Activated CD4-positive, alpha-beta memory T cell treated with anti-CD3 and anti-CD28 coated beads for 36 hours (primary cell): ENCODE measurements at regions of chr10 and their contacts with region 1.

Region 1: DNA sequence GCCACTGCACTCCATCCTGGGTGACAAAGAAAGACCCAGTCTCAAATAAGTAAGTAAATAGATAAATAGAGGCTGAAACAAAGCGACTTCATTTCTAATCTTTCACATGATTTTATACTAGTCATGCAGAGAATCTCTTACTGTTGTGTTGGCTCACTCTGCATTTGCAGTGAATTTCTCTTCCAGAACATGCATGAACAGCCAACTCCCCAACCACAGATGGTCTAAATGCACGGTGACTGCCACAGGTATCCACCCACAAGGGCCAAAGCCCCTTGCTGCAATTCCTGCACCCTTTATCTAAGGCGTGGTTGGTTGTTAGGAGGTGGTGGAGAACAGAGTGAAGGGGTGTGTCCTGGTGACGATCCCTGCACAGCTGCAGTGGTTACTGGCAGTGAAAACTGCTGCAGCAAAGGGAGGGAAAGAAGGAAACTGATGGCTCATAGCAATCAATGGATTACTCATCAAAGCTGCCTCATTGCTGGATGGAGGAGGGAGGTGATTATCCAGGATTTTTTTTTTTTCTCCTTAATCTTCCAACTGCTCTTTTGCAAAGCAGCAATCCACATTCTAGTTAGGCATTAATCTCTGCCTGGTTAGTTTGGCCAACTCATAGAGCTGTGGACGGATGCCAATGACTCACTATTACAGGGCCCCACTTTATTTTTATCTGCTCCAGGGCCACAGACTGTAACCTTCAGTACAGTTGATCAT is 50.6 kb downstream of the PRTFDC1 start:
- DNase-seq: peak; percentile 47
- H3K4me3 Mint-ChIP-seq: no peak overlapping the region
- H3K27ac Mint-ChIP-seq: peak overlapping the region; percentile 25
- H3K4me1 Mint-ChIP-seq: peaks cover 47% of the 10 kb centered on the region
- H3K27me3 Mint-ChIP-seq: no peaks in the 10 kb centered on the region

Region 2: DNA sequence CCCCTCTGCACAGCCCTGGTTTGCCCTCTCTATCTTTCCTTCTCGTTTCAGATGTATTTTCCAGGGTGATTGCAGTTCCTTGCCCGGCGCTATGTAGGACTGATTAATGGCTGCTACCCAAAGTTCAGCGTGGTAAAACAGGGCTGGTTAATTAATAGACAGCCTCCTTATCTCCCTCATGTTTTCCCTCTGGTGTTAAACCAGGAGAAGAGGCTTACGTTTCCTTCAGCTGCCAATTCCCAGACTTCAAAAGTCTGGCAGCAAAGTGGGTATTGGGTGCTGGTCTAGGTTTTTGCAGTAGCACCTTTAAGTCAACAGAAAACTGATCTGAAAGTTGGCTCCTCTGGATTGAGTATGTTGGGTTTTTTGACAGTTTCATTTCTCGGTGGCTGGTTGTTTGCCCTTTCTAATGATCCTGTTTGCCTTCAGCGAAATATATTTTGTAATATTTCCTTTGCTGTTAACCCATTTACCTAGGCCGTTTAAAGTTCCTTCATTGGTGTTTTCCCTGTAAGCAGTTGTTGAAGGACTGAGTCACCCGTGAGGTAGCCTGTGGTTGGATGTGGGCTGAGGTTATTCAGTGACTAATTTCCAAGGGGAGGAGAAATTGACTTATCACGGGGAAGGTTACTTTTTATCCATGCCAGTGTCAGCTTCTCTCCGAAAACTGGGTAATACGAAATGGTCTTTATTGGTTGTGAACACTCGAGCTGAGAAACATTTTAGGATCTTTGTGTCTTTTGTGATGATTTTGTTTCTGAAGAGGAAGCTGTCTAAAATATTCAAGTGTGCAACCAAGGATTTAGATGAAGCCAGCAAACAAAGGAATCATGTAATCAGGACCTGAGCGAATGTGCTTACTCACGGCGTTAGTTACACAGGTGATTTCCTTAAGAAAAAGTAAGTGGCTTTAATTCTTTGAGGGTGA is 435.7 kb before region 1 on chr10:
- CTCF ChIA-PET with region 1: no interaction called
- POLR2A ChIA-PET with region 1: no interaction called
- intact Hi-C with region 1: loop called (anchors 2 kb)
- DNase-seq: peak; percentile 84
- H3K4me3 Mint-ChIP-seq: peak overlapping the region; percentile 44
- H3K27ac Mint-ChIP-seq: peak overlapping the region; percentile 53
- H3K4me1 Mint-ChIP-seq: peaks cover 42% of the 10 kb centered on the region
- H3K27me3 Mint-ChIP-seq: peaks cover 21% of the 10 kb centered on the region

Region 3: GRCh38 chr10:24556750-24557742 is 344.8 kb before region 1 on chr10:
- CTCF ChIA-PET with region 1: no interaction called
- POLR2A ChIA-PET with region 1: no interaction called
- intact Hi-C with region 1: no loop called
- DNase-seq: no peak
- H3K4me3 Mint-ChIP-seq: no peak overlapping the region
- H3K27ac Mint-ChIP-seq: no peak overlapping the region
- H3K4me1 Mint-ChIP-seq: no peaks in the 10 kb centered on the region
- H3K27me3 Mint-ChIP-seq: no peaks in the 10 kb centered on the region

Region 4: GRCh38 chr10:24706479-24707118 is 195.2 kb before region 1 on chr10:
- CTCF ChIA-PET with region 1: no interaction called
- POLR2A ChIA-PET with region 1: no interaction called
- intact Hi-C with region 1: loop called (anchors 1 kb)
- DNase-seq: peak; percentile 62
- H3K4me3 Mint-ChIP-seq: no peak overlapping the region
- H3K27ac Mint-ChIP-seq: no peak overlapping the region
- H3K4me1 Mint-ChIP-seq: peaks cover 10% of the 10 kb centered on the region
- H3K27me3 Mint-ChIP-seq: peaks cover 1% of the 10 kb centered on the region

Region 5: GRCh38 chr10:24744946-24745345 is 156.9 kb before region 1 on chr10:
- CTCF ChIA-PET with region 1: no interaction called
- POLR2A ChIA-PET with region 1: no interaction called
- intact Hi-C with region 1: no loop called
- DNase-seq: no peak
- H3K4me3 Mint-ChIP-seq: no peak overlapping the region
- H3K27ac Mint-ChIP-seq: no peak overlapping the region
- H3K4me1 Mint-ChIP-seq: no peaks in the 10 kb centered on the region
- H3K27me3 Mint-ChIP-seq: no peaks in the 10 kb centered on the region

Region 6: DNA sequence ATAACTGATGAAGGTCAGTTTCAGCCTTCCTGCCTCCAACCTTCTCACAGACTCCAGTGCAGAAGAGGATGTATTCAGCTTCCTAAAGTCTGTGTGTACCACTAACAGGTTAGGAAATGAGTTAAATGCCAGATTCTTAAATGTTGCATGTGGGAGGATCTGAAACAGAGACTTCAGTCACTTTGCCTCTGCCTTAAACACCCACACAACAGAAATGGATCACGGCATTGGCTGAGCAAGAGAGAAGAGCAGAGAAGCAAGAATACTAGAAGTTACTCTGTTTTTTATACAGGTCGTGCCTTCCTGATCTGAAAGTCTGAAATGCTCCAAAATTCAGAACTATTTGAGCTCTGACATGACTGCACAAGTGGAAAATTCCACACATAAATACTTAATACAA is 79.3 kb before region 1 on chr10:
- CTCF ChIA-PET with region 1: no interaction called
- POLR2A ChIA-PET with region 1: no interaction called
- intact Hi-C with region 1: loop called (anchors 2 kb)
- DNase-seq: peak; percentile 52
- H3K4me3 Mint-ChIP-seq: no peak overlapping the region
- H3K27ac Mint-ChIP-seq: no peak overlapping the region
- H3K4me1 Mint-ChIP-seq: peaks cover 36% of the 10 kb centered on the region
- H3K27me3 Mint-ChIP-seq: no peaks in the 10 kb centered on the region

Region 7: DNA sequence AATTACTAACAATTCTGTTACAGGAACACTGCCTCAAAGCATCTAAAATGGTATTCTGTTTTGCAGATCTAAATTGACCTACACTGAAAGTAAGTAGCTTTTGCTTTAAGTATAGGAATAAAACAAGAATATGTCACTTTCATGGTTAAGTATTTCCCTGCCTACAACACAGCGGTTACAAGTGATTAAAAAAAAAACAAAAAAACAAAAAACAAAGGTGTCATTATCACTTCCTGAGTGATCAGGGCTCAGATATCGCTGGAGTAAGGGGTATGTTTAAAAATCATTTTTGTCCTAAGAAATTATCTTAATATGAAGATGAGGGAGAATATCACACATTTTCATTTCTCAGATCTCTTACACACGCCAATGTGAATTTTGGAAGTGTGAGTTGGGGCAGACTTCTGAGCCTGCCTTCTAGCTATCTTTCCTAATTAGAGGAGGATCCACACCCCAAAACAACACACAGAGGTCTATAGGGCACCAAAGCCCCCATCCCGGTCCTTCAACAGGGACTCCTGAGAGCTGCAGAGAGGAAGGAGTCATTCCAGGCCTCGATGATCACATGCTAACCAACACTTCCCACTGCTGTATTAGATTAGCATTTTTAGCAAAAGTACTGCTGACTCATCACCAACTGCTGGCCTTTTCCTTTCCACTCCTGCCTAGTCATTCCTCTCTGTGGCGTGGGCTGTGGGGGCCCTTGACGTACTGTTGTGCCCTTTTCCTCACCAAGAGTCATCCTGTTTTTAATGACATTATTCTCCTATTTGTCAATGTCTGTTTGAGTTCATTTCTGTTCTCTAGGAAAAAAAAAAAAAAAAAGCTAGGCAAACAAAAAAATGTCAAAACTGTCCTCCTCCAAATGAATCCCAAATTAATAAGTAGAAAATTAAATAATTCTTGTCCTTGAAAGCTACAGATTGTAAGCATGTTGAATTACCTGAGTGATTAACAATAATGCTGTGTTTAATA is 19.4 kb after region 1 on chr10:
- CTCF ChIA-PET with region 1: interaction called, 3 read pairs
- POLR2A ChIA-PET with region 1: interaction called, 8 read pairs
- intact Hi-C with region 1: loop called (anchors 1 kb)
- DNase-seq: peak; percentile 89
- H3K4me3 Mint-ChIP-seq: peak overlapping the region; percentile 22
- H3K27ac Mint-ChIP-seq: peak overlapping the region; percentile 78
- H3K4me1 Mint-ChIP-seq: peaks cover 21% of the 10 kb centered on the region
- H3K27me3 Mint-ChIP-seq: no peaks in the 10 kb centered on the region